ENCODE measurements at regions of chr11 and their contacts with region 1.

Region 1: GRCh38 chr11:6357222-6357621 is 33.1 kb upstream of the SMPD1 start:
- DNase-seq: peak in 1 of 2 donors; percentile 30
- H3K4me3 ChIP-seq: no peak overlapping the region
- CTCF ChIP-seq: no peak
- POLR2A ChIP-seq: no peak

Region 2: GRCh38 chr11:6027501-6027900 is 329.7 kb before region 1 on chr11:
- intact Hi-C with region 1: loop called (anchors 5 kb)
- DNase-seq: no peak
- H3K4me3 ChIP-seq: no peak overlapping the region
- CTCF ChIP-seq: no peak
- POLR2A ChIP-seq: no peak

Region 3: DNA sequence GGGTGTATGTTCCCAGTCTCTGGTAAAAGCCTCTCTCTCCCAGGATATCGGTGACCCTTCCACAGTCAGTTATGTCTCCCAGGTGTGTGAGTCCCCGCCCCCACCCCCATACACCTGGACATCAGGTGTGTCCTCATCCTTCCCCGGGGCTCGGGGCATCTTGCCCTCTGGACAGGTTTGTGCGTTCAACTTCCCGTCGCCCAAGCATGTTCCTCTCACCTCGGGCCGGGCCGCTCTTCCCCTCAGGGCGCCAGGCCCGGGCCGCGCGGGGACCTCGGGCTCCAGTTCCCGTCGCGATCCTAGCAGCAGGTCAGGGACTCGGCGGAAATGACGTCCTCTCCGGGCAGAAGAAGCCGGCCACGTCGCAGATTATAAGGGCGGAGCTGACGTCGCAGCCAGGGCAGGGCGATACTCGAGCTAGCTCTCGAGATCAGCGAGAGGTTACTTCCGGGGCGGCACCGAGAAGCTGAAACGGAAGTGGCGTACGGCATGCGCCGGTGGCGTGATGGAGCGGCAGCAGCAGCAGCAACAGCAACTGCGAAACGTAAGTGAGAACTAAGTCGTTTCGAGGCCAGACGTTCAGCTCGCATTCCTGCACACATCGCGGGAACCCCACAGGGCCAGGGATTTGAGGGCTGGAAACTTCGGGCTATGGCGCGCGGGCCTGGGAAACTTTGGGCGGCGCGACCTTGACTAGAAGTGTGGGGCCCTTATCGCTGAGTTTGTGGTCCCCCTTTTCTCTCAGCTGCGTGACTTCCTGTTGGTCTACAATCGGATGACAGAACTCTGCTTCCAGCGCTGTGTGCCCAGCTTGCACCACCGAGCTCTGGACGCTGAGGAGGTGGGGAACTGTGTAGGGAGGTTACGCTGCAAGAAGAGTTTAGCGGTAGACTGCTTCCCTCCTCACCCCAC is 124.0 kb after region 1 on chr11 and contains the starts of genes ARFIP2 and TIMM10B:
- intact Hi-C with region 1: no loop called
- DNase-seq: peak; percentile 98 to 99
- H3K4me3 ChIP-seq: peak within 1 kb of the TSS; percentile 63
- CTCF ChIP-seq: no peak
- POLR2A ChIP-seq: peak in 1 of 2 donors; percentile 9
- total RNA-seq, gene ARFIP2: 56.6 to 77.5 (median 63.9) TPM
- total RNA-seq, gene TIMM10B: 20.1 to 28.0 (median 21.9) TPM

Region 4: GRCh38 chr11:7548659-7549274 is 1191.5 kb after region 1 on chr11:
- intact Hi-C with region 1: no loop called
- DNase-seq: no peak
- H3K4me3 ChIP-seq: no peak overlapping the region
- CTCF ChIP-seq: no peak
- POLR2A ChIP-seq: no peak

Measured in lower leg skin (tissue), 4 donors.